WTC11 (cell line): ENCODE measurements at regions of chr11 and their contacts with region 1.

Region 1: GRCh38 chr11:130434521-130435223 is 6.3 kb upstream of the ADAMTS8 start:
- DNase-seq: peak; percentile 74
- ATAC-seq: peak; percentile 63
- H3K4me3 Mint-ChIP-seq: no peak overlapping the region
- H3K27ac Mint-ChIP-seq: no peak overlapping the region
- H3K4me1 Mint-ChIP-seq: peaks cover under 1% of the 10 kb centered on the region; the same call in 1 of the 2 replicates
- H3K27me3 Mint-ChIP-seq: peaks cover 13% of the 10 kb centered on the region
- CTCF ChIP-seq: peak; percentile 63; the same call in 1 of the 2 replicates

Region 2: GRCh38 chr11:130213143-130213978 is 221.3 kb before region 1 on chr11:
- CTCF ChIA-PET with region 1: interaction called, 39 read pairs
- POLR2A ChIA-PET with region 1: no interaction called
- DNase-seq: peak; percentile 84
- ATAC-seq: peak; percentile 70
- H3K4me3 Mint-ChIP-seq: no peak overlapping the region
- H3K27ac Mint-ChIP-seq: no peak overlapping the region
- H3K4me1 Mint-ChIP-seq: peaks cover 22% of the 10 kb centered on the region
- H3K27me3 Mint-ChIP-seq: no peaks in the 10 kb centered on the region
- CTCF ChIP-seq: peak; percentile 99

Region 3: DNA sequence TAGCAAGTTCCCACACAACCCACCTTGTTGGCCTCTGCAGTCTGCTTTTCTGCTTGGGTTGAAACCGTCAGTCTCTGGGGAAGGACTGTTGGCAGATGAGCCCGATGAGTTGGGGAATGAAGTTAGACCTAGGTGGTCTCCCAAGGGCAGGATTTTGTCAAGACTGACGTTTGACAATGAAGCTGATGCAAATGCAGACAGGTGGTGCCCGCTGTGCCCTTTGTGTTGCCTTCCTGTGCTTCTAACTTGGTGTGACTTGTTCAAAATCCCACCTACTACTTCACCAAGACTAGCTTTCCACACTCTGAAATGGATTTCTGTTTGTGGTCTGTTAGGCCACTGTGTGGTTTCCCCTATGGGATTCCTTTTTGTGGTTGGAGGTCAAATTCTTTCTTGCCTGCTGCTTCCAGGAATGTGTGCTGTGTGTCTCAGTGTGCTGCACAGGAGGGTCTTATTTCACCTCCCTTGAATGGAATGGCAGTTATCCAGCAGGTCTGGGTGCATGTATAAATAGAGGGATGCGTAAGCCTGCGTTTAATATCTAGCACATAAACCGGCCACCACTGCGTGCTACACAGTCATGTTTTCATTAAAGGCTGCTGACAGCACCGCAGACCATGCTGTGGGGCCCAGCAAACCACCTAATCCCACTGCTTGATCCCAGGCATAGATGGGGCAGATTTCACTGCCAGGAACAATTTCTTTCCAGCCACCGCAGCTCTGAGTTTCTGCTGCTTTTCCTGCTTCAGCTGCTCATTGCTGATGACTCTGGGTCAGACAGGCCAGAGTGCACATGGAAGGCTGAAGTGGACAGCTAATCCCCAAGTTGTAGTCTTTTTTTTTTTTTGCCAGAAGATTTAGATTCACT is 51.1 kb before region 1 on chr11:
- CTCF ChIA-PET with region 1: interaction called, 11 read pairs
- POLR2A ChIA-PET with region 1: no interaction called
- DNase-seq: peak; percentile 34
- ATAC-seq: peak; percentile 79
- H3K4me3 Mint-ChIP-seq: no peak overlapping the region; the same call in 1 of the 2 replicates
- H3K27ac Mint-ChIP-seq: peak overlapping the region; percentile 93
- H3K4me1 Mint-ChIP-seq: peaks cover 68% of the 10 kb centered on the region
- H3K27me3 Mint-ChIP-seq: no peaks in the 10 kb centered on the region; the same call in 1 of the 2 replicates
- CTCF ChIP-seq: no peak

Region 4: DNA sequence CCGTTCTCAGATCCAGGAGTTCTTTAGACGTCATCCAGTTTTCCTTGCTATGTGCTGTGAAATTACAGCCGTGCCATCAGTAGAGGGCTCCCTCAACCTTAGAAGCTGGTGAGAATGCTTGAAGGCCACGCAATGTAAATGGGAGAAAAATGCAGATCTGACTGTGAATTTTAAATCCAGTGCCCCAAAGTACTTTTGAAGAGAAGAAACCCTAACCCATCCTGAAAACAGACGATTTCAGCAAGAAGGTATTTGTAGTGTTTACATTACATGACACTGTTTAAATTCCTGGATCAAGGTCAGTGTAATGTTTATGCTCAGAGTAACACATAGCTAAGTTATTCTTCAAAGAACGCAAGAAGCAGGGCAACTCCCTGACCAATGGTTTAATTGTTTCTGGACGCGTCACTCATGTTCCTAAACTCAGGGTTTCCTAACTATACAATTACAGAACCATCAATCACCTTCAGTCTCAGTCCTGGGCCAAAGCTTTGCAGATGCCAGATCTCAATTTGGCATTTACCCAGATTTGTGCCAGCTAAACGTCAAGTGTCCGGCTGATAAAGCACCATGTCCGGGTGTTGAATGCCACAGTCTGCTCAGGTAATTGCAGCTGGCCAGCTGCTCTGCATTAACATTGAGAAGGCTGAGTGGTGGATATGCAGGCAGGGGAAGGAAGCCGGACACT is 44.5 kb before region 1 on chr11:
- CTCF ChIA-PET with region 1: interaction called, 12 read pairs
- POLR2A ChIA-PET with region 1: no interaction called
- DNase-seq: no peak
- ATAC-seq: peak; percentile 82
- H3K4me3 Mint-ChIP-seq: no peak overlapping the region
- H3K27ac Mint-ChIP-seq: no peak overlapping the region
- H3K4me1 Mint-ChIP-seq: peaks cover 48% of the 10 kb centered on the region
- H3K27me3 Mint-ChIP-seq: peaks cover 18% of the 10 kb centered on the region
- CTCF ChIP-seq: no peak

Region 5: GRCh38 chr11:130448416-130449309 is 14.0 kb after region 1 on chr11 and contains the start of gene ADAMTS15:
- CTCF ChIA-PET with region 1: interaction called, 20 read pairs
- POLR2A ChIA-PET with region 1: interaction called, 12 read pairs
- DNase-seq: peak; percentile 91
- ATAC-seq: peak; percentile 84
- H3K4me3 Mint-ChIP-seq: peak within 1 kb of the TSS; percentile 79
- H3K27ac Mint-ChIP-seq: no peak within 1 kb of the TSS
- H3K4me1 Mint-ChIP-seq: peaks cover 10% of the 10 kb centered on the region
- H3K27me3 Mint-ChIP-seq: peaks cover 85% of the 10 kb centered on the region
- CTCF ChIP-seq: no peak
- total RNA-seq, gene ADAMTS15: 3.1 to 3.7 TPM (median 3.2 TPM) in 3 replicates

Region 6: DNA sequence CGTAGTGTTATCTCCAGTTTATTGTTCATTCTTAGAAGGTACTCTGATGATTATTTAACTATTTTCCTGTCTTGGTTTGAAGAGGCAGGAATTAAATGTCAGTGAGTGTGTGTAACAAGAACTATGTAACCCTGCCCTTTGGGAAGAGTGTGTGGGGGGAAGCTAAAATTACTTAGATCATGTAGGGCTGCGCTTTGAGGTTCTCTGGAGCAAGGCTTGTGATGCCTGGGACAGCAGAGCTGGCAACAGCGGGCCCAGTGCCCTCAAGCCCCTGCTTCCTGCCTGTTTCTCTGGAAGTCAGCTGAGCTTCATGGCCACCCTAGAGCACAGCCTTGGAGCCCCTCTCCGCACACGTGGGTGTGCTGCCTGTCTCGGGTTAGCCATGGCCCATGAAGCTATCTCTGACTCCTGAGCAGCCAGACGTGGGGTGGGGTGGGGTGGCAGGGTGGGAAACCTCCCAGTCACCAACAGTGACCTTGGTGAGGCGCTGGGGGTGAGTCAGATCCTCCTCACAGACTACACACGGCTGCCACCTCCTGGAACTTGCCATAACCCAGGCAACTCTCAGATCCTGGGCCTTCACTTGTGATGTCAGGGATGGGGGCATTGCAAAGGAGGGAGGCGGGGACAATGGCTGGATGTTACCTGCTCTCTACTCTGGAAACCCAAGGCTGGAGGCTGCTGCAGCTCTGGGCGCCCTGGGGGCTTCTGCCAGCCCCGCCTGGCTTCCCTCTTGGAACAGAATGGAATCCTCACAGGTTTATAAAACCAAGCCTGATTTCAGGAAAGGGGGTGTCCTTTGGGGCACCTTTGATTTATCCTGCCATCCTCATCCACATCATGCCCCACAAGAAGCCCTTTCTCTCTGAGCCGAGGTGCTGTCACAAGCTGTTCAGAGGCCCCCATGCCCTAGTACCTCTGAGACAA is 393.0 kb after region 1 on chr11:
- CTCF ChIA-PET with region 1: interaction called, 29 read pairs
- POLR2A ChIA-PET with region 1: no interaction called
- DNase-seq: peak; percentile 78
- ATAC-seq: peak; percentile 97
- H3K4me3 Mint-ChIP-seq: no peak overlapping the region
- H3K27ac Mint-ChIP-seq: no peak overlapping the region
- H3K4me1 Mint-ChIP-seq: peaks cover 25% of the 10 kb centered on the region
- H3K27me3 Mint-ChIP-seq: no peaks in the 10 kb centered on the region; the same call in 1 of the 2 replicates
- CTCF ChIP-seq: no peak; the same call in 1 of the 2 replicates

Region 7: DNA sequence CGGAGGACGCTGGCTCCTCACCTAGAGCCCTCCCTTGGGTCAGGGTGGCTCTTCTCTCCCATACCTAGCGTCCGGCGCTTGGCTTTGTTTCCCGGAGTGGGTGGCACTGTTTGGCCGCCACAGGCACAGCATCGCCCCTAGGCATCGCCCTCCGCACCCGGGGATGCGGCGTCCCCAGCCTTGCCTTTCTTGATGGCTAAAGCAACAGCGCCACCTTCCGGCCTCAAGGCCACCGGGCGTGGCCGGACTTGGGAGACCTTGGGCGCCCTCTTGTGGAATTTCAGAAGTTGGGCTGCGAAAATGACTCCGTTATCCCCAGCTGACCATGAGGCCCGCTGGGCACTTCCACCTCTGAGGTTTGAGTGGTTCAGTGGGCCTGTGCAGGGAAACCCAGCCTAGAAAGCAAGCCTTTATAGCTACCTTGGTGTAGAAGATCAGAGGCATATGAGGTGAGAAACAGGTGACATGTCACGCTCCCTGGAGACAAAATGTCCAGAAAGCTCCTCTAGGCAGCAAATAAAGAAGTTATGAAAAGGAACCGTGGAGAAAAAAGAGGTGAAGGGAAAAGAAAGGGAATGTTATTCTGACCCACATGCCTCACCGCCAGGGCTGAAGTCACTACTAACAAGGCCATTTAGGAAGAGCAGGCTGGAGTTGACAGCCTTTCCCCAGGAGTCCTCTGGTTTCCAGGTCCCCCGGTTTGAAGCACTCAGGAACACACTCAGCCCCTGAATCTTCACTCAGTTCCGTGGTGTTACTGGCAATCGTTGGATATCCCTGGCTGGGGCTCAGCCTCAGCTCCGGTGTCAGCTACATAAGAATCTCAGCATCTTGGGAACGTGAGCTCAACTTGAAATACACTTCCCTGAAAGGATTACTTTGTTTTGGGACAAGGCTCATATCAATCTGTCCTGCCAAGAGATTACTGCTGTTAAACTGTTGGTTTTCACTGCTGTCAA is 427.5 kb after region 1 on chr11:
- CTCF ChIA-PET with region 1: interaction called, 152 read pairs
- POLR2A ChIA-PET with region 1: interaction called, 3 read pairs
- DNase-seq: peak; percentile 95
- ATAC-seq: peak; percentile 88
- H3K4me3 Mint-ChIP-seq: peak overlapping the region; percentile 43
- H3K27ac Mint-ChIP-seq: no peak overlapping the region
- H3K4me1 Mint-ChIP-seq: peaks cover 8% of the 10 kb centered on the region
- H3K27me3 Mint-ChIP-seq: peaks cover 11% of the 10 kb centered on the region
- CTCF ChIP-seq: peak; percentile 100